B cell (primary cell): ENCODE measurements at regions of chr3 and their contacts with region 1.

Region 1: GRCh38 chr3:184229394-184230080 is at the start of gene VWA5B2:
- DNase-seq: peak; percentile 88
- ATAC-seq: peak; percentile 98
- H3K4me3 ChIP-seq: peak within 1 kb of the TSS; percentile 9 to 74 (median 59)
- H3K4me3 Mint-ChIP-seq: peak within 1 kb of the TSS; percentile 85
- H3K27ac ChIP-seq: no peak within 1 kb of the TSS
- H3K27ac Mint-ChIP-seq: no peak within 1 kb of the TSS
- H3K4me1 ChIP-seq: peaks cover 15 to 25% of the 10 kb centered on the region in 2 donors
- H3K4me1 Mint-ChIP-seq: peaks cover 20% of the 10 kb centered on the region
- H3K27me3 ChIP-seq: peaks cover 0 to 73% (median 39%) of the 10 kb centered on the region in 4 experiments
- H3K27me3 Mint-ChIP-seq: peaks cover 44% of the 10 kb centered on the region
- CTCF ChIP-seq: peak; percentile 37
- total RNA-seq, gene VWA5B2: 0.37 TPM in 1 of 2 replicates, not detected in the other

Region 2: DNA sequence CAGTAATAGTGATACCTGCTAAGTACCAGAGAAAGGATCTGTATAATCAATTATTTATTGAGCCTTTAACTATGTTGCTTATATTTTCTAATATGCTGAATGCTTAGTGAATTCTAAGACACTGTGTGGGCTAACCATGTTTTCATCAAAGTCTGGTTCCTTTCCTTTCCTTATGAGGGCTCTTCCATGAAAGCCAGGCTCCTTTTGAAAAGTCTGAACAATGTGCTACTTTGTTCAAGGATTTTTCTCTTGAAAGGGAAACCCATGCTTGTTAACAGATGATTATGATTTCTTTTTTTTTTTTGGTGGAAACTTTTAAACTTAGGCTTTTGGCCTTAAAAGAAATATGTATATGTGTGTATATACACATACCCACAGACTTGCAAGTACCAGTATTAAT is 514.9 kb before region 1 on chr3:
- CTCF ChIA-PET with region 1: no interaction called
- POLR2A ChIA-PET with region 1: no interaction called
- intact Hi-C with region 1: no loop called
- DNase-seq: no peak
- ATAC-seq: no peak
- H3K4me3 ChIP-seq: no peak overlapping the region
- H3K4me3 Mint-ChIP-seq: no peak overlapping the region
- H3K27ac ChIP-seq: no peak overlapping the region
- H3K27ac Mint-ChIP-seq: no peak overlapping the region
- H3K4me1 ChIP-seq: no peaks in the 10 kb centered on the region
- H3K4me1 Mint-ChIP-seq: peaks cover 8% of the 10 kb centered on the region
- H3K27me3 ChIP-seq: no peaks in the 10 kb centered on the region
- H3K27me3 Mint-ChIP-seq: no peaks in the 10 kb centered on the region
- CTCF ChIP-seq: no peak

Region 3: DNA sequence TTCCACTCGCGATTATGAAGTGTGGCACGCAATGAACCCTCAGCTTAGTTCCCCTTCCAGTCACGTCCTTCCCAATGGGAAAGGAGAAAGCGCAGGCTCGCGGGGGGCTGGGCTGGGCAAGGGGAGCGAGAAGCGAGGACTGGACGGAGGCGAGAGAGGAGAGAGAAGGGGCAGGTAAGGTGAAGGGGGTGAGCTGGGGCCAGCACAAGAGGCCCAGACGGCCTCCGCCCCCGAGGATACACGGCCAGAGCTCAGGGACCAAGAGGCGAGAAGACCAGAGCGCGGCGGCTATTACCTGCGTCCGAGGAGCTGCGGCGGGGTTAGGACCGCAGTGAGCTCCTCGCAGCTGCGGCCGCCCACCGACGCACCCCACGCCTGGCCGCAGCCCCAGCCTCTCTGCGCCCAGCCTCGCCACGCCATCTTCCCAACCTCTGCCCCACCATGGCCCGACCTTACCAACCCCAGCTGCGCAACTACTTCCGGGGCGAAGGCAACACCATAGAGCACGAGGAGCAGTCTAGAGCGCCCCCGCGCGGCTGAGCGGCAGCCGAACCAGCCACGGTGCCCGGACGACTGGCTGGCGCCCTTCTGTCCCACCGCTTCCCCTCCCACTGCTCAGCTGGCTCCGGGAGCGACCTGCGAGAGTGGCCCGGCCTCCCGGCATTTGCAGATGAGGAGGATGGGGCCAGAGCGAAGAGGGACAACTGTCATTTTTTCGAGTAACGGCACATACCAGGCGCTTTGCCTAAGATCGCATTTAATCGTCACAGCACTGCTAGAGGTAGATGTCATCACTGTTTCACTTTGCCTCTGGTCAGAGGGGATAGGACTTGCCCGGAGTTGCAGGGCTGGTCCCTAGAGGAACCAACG is 344.9 kb before region 1 on chr3 and contains the start of gene PARL:
- CTCF ChIA-PET with region 1: interaction called, 4 read pairs
- POLR2A ChIA-PET with region 1: no interaction called
- intact Hi-C with region 1: loop called (anchors 1 kb)
- DNase-seq: peak; percentile 95
- ATAC-seq: peak; percentile 100
- H3K4me3 ChIP-seq: peak within 1 kb of the TSS; percentile 68 to 96 (median 84)
- H3K4me3 Mint-ChIP-seq: peak within 1 kb of the TSS; percentile 92
- H3K27ac ChIP-seq: peak within 1 kb of the TSS; percentile 39 to 75
- H3K27ac Mint-ChIP-seq: peak within 1 kb of the TSS; percentile 94
- H3K4me1 ChIP-seq: peaks cover 11 to 19% of the 10 kb centered on the region in 2 donors
- H3K4me1 Mint-ChIP-seq: peaks cover 36% of the 10 kb centered on the region
- H3K27me3 ChIP-seq: peaks cover 0 to 6% (median 0%) of the 10 kb centered on the region in 4 experiments
- H3K27me3 Mint-ChIP-seq: peaks cover 3% of the 10 kb centered on the region
- CTCF ChIP-seq: peak; percentile 90
- total RNA-seq, gene PARL: 46.7 and 51.2 TPM in 2 replicates

Region 4: GRCh38 chr3:184110316-184110725 is 119.2 kb before region 1 on chr3:
- CTCF ChIA-PET with region 1: no interaction called
- POLR2A ChIA-PET with region 1: no interaction called
- intact Hi-C with region 1: no loop called
- DNase-seq: no peak
- ATAC-seq: no peak
- H3K4me3 ChIP-seq: no peak overlapping the region
- H3K4me3 Mint-ChIP-seq: no peak overlapping the region
- H3K27ac ChIP-seq: no peak overlapping the region
- H3K27ac Mint-ChIP-seq: no peak overlapping the region
- H3K4me1 ChIP-seq: no peaks in the 10 kb centered on the region
- H3K4me1 Mint-ChIP-seq: no peaks in the 10 kb centered on the region
- H3K27me3 ChIP-seq: no peaks in the 10 kb centered on the region
- H3K27me3 Mint-ChIP-seq: peaks cover 11% of the 10 kb centered on the region
- CTCF ChIP-seq: no peak

Region 5: DNA sequence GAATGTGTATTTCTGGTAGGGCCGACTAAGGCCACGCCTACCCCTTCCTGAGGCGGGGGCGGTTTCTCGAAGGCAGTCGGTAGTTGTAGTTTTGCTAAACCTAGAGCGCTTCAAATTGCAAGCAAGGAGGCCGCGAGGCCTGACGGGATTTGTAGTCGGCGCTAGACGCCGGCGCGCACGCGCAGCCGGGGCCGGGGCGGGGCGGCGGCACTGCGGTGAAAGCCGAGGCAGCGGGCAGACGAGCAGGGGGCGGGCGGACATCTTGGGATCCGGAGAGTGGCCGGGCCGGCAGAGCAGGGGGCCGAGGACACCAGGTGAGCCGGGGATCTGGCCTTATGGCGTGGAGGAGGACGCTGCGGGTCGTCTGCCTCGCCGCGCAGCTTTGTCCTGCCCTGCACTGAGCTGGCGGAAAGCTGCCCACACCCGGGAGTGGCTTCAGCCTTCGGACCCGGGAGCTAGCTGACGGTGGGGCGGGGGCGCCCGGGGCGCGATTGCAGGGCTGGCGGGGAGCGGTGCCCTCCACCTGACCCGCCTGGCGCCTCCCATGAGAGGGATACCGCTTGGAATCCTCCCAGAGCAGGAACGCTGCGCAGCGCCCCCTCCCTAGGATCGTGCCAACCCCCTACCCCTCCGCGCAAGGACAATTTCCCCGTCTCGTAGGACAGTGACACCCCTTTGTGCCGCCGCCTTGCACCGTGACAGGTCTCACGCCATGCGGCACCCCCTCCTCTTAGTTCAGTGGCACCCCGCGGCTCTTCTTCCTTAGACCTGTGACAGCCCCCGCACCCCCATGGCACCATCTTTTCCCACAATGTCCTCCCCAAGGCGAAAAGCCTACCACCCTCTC is 54.7 kb before region 1 on chr3 and contains the start of gene AP2M1:
- CTCF ChIA-PET with region 1: interaction called, 5 read pairs
- POLR2A ChIA-PET with region 1: no interaction called
- intact Hi-C with region 1: loop called (anchors 1 kb)
- DNase-seq: peak; percentile 98
- ATAC-seq: peak; percentile 98
- H3K4me3 ChIP-seq: peak within 1 kb of the TSS; percentile 57 to 100 (median 98)
- H3K4me3 Mint-ChIP-seq: peak within 1 kb of the TSS; percentile 93
- H3K27ac ChIP-seq: peak within 1 kb of the TSS; percentile 56 to 80
- H3K27ac Mint-ChIP-seq: peak within 1 kb of the TSS; percentile 96
- H3K4me1 ChIP-seq: peaks cover 23 to 34% of the 10 kb centered on the region in 2 donors
- H3K4me1 Mint-ChIP-seq: peaks cover 37% of the 10 kb centered on the region
- H3K27me3 ChIP-seq: no peaks in the 10 kb centered on the region
- H3K27me3 Mint-ChIP-seq: no peaks in the 10 kb centered on the region
- CTCF ChIP-seq: no peak
- total RNA-seq, gene AP2M1: 191 and 207 TPM in 2 replicates

Region 6: GRCh38 chr3:184185461-184186308 is 43.9 kb before region 1 on chr3 and contains the start of gene ABCF3:
- CTCF ChIA-PET with region 1: interaction called, 6 read pairs
- POLR2A ChIA-PET with region 1: no interaction called
- intact Hi-C with region 1: loop called (anchors 1 kb)
- DNase-seq: peak; percentile 100
- ATAC-seq: peak; percentile 94
- H3K4me3 ChIP-seq: peak within 1 kb of the TSS; percentile 70 to 100 (median 97)
- H3K4me3 Mint-ChIP-seq: peak within 1 kb of the TSS; percentile 99
- H3K27ac ChIP-seq: peak within 1 kb of the TSS; percentile 48 to 68
- H3K27ac Mint-ChIP-seq: peak within 1 kb of the TSS; percentile 94
- H3K4me1 ChIP-seq: peaks cover 17 to 21% of the 10 kb centered on the region in 2 donors
- H3K4me1 Mint-ChIP-seq: peaks cover 33% of the 10 kb centered on the region
- H3K27me3 ChIP-seq: no peaks in the 10 kb centered on the region
- H3K27me3 Mint-ChIP-seq: no peaks in the 10 kb centered on the region
- CTCF ChIP-seq: no peak
- total RNA-seq, gene ABCF3: 115 and 131 TPM in 2 replicates

Region 7: GRCh38 chr3:184218814-184219213 is 10.7 kb before region 1 on chr3:
- CTCF ChIA-PET with region 1: interaction called, 12 read pairs
- POLR2A ChIA-PET with region 1: interaction called, 3 read pairs
- intact Hi-C with region 1: no loop called
- DNase-seq: no peak
- ATAC-seq: no peak
- H3K4me3 ChIP-seq: no peak overlapping the region
- H3K4me3 Mint-ChIP-seq: no peak overlapping the region
- H3K27ac ChIP-seq: no peak overlapping the region
- H3K27ac Mint-ChIP-seq: no peak overlapping the region
- H3K4me1 ChIP-seq: no peaks in the 10 kb centered on the region
- H3K4me1 Mint-ChIP-seq: no peaks in the 10 kb centered on the region
- H3K27me3 ChIP-seq: peaks cover 0 to 10% (median 5%) of the 10 kb centered on the region in 4 experiments
- H3K27me3 Mint-ChIP-seq: peaks cover 16% of the 10 kb centered on the region
- CTCF ChIP-seq: no peak

Region 8: DNA sequence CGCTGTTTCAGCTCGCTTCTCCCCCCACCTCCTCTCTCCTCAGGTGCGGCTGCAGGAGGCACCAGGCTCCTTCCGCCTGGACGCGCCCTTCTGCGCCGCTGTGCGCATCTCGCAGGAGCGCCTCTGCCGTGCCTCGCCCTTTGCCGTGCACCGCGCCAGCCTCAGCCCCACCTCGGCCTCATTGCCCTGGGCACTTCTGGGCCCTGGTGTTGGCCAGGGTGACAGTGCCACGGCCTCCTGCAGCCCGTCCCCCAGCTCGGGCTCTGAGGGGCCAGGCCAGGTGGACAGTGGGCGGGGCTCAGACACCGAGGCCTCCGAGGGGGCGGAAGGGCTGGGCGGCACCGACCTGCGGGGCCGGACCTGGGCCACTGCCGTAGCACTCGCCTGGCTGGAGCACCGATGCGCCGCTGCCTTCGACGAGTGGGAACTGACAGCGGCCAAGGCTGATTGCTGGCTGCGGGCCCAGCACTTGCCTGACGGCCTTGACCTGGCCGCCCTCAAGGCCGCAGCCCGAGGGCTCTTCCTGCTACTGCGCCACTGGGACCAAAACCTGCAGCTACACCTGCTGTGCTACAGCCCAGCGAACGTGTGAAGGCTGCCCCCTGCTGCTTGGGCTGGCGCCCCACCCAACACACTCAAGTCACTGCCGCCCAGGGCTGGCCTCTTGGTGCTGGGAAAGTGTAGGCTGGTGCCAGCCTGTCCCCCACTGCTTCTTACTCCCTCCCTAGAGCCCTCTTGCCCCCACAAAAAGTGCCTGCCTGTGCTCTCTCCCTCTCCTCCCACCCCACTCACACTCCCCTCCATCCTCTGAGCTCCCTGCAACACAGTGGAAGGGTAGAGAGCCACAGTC is 12.1 kb after region 1 on chr3:
- CTCF ChIA-PET with region 1: interaction called, 22 read pairs
- POLR2A ChIA-PET with region 1: no interaction called
- intact Hi-C with region 1: no loop called
- DNase-seq: peak; percentile 33
- ATAC-seq: peak; percentile 57
- H3K4me3 ChIP-seq: no peak overlapping the region
- H3K4me3 Mint-ChIP-seq: no peak overlapping the region
- H3K27ac ChIP-seq: no peak overlapping the region
- H3K27ac Mint-ChIP-seq: no peak overlapping the region
- H3K4me1 ChIP-seq: no peaks in the 10 kb centered on the region
- H3K4me1 Mint-ChIP-seq: no peaks in the 10 kb centered on the region
- H3K27me3 ChIP-seq: peaks cover 0 to 3% (median 0%) of the 10 kb centered on the region in 4 experiments
- H3K27me3 Mint-ChIP-seq: no peaks in the 10 kb centered on the region
- CTCF ChIP-seq: peak; percentile 10

Region 9: DNA sequence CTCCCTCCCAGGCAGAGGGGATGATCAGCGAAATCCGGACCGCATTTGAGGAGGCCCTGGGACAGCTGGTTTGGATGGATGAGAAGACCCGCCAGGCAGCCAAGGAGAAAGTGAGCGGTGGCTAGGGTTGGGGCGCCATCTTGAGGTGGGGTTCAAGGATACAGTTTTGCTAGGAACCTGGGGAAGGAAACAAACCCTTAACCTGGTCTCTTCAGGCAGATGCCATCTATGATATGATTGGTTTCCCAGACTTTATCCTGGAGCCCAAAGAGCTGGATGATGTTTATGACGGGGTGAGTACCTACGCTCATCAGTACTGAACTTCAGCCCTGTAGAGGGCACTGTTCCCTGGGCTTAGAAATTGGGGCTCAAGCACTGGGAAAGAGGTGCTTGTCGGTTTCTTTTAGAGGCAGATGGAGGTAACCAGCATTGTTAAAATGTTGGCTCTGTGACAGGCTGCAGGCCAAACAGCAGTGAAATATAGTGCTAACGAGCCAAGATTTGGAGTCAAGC is 59.9 kb after region 1 on chr3:
- CTCF ChIA-PET with region 1: interaction called, 9 read pairs
- POLR2A ChIA-PET with region 1: interaction called, 5 read pairs
- intact Hi-C with region 1: loop called (anchors 1 kb)
- DNase-seq: peak; percentile 56
- ATAC-seq: peak; percentile 49
- H3K4me3 ChIP-seq: no peak overlapping the region
- H3K4me3 Mint-ChIP-seq: no peak overlapping the region
- H3K27ac ChIP-seq: no peak overlapping the region
- H3K27ac Mint-ChIP-seq: no peak overlapping the region
- H3K4me1 ChIP-seq: no peaks in the 10 kb centered on the region
- H3K4me1 Mint-ChIP-seq: no peaks in the 10 kb centered on the region
- H3K27me3 ChIP-seq: peaks cover 0 to 15% (median 4%) of the 10 kb centered on the region in 4 experiments
- H3K27me3 Mint-ChIP-seq: peaks cover 23% of the 10 kb centered on the region
- CTCF ChIP-seq: peak; percentile 66